CD8-positive, alpha-beta T cell (primary cell): ENCODE measurements at regions of chr17 and their contacts with region 1.

Region 1: GRCh38 chr17:42388381-42389134 is at the start of gene STAT3:
- DNase-seq: peak; percentile 99 to 100 (median 100)
- ATAC-seq: peak; percentile 86
- H3K4me3 ChIP-seq: peak within 1 kb of the TSS; percentile 61 to 86
- H3K4me3 Mint-ChIP-seq: peak within 1 kb of the TSS; percentile 99
- H3K27ac ChIP-seq: peak within 1 kb of the TSS; percentile 99
- H3K27ac Mint-ChIP-seq: peak within 1 kb of the TSS; percentile 100
- H3K4me1 ChIP-seq: peaks cover 29% of the 10 kb centered on the region
- H3K4me1 Mint-ChIP-seq: peaks cover 47% of the 10 kb centered on the region
- H3K27me3 ChIP-seq: no peaks in the 10 kb centered on the region
- H3K27me3 Mint-ChIP-seq: no peaks in the 10 kb centered on the region
- CTCF ChIP-seq: no peak
- total RNA-seq, gene STAT3: 338 to 343 TPM

Region 2: GRCh38 chr17:41918314-41919164 is 470.0 kb before region 1 on chr17 and contains the start of gene ACLY:
- CTCF ChIA-PET with region 1: no interaction called
- POLR2A ChIA-PET with region 1: no interaction called
- intact Hi-C with region 1: loop called in 1 of 2 experiments (anchors 2 kb)
- DNase-seq: peak; percentile 89 to 97 (median 95)
- ATAC-seq: peak; percentile 99
- H3K4me3 ChIP-seq: peak within 1 kb of the TSS; percentile 94 to 100
- H3K4me3 Mint-ChIP-seq: peak within 1 kb of the TSS; percentile 90
- H3K27ac ChIP-seq: peak within 1 kb of the TSS; percentile 82 to 86
- H3K27ac Mint-ChIP-seq: peak within 1 kb of the TSS; percentile 81
- H3K4me1 ChIP-seq: peaks cover 17% of the 10 kb centered on the region
- H3K4me1 Mint-ChIP-seq: peaks cover 32% of the 10 kb centered on the region
- H3K27me3 ChIP-seq: no peaks in the 10 kb centered on the region
- H3K27me3 Mint-ChIP-seq: no peaks in the 10 kb centered on the region
- CTCF ChIP-seq: no peak
- total RNA-seq, gene ACLY: 24.9 to 25.0 TPM

Region 3: GRCh38 chr17:42248351-42249179 is 140.0 kb before region 1 on chr17:
- CTCF ChIA-PET with region 1: no interaction called
- POLR2A ChIA-PET with region 1: interaction called, 19 read pairs
- intact Hi-C with region 1: loop called (anchors 1 to 2 kb)
- DNase-seq: peak; percentile 60 to 96 (median 80)
- ATAC-seq: peak; percentile 85
- H3K4me3 ChIP-seq: peak overlapping the region; percentile 36 to 46
- H3K4me3 Mint-ChIP-seq: peak overlapping the region; percentile 81
- H3K27ac ChIP-seq: peak overlapping the region; percentile 87 to 90
- H3K27ac Mint-ChIP-seq: peak overlapping the region; percentile 98
- H3K4me1 ChIP-seq: peaks cover 55% of the 10 kb centered on the region
- H3K4me1 Mint-ChIP-seq: peaks cover 70% of the 10 kb centered on the region
- H3K27me3 ChIP-seq: no peaks in the 10 kb centered on the region
- H3K27me3 Mint-ChIP-seq: no peaks in the 10 kb centered on the region
- CTCF ChIP-seq: no peak

Region 4: GRCh38 chr17:42312285-42313130 is 76.0 kb before region 1 on chr17:
- CTCF ChIA-PET with region 1: interaction called, 672 read pairs
- POLR2A ChIA-PET with region 1: interaction called, 10 read pairs
- intact Hi-C with region 1: no loop called
- DNase-seq: peak; percentile 45 to 89 (median 79)
- ATAC-seq: peak; percentile 61
- H3K4me3 ChIP-seq: peak overlapping the region; percentile 20 to 38
- H3K4me3 Mint-ChIP-seq: peak overlapping the region; percentile 74
- H3K27ac ChIP-seq: peak overlapping the region; percentile 31 to 66
- H3K27ac Mint-ChIP-seq: peak overlapping the region; percentile 86
- H3K4me1 ChIP-seq: peaks cover 69% of the 10 kb centered on the region
- H3K4me1 Mint-ChIP-seq: peaks cover 72% of the 10 kb centered on the region
- H3K27me3 ChIP-seq: no peaks in the 10 kb centered on the region
- H3K27me3 Mint-ChIP-seq: no peaks in the 10 kb centered on the region
- CTCF ChIP-seq: peak; percentile 62

Region 5: DNA sequence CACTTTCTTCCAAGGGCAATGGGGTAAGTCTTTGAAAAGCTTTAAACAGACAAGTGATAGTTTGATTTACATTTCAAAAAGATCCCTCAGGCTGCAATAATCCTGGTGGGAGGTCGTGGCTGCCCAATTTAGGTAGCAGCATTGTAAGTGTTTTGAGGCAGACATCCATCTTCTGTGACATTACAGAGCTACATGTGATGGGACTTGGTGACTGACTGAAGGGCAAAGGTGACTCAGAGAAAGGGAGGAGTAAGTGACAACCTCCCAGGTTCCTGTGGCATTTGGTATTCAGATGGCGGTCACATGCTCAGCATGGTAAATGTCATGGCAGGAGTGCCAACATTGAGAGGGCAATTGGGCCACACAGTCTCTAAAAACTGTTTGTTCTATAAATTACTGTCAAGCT is 26.8 kb before region 1 on chr17:
- CTCF ChIA-PET with region 1: no interaction called
- POLR2A ChIA-PET with region 1: interaction called, 15 read pairs
- intact Hi-C with region 1: no loop called
- DNase-seq: peak in 8 of 9 experiments; percentile 13 to 72 (median 47)
- ATAC-seq: peak; percentile 95
- H3K4me3 ChIP-seq: no peak overlapping the region
- H3K4me3 Mint-ChIP-seq: no peak overlapping the region
- H3K27ac ChIP-seq: peak overlapping the region in 1 of 2 experiments; percentile 51
- H3K27ac Mint-ChIP-seq: peak overlapping the region; percentile 67
- H3K4me1 ChIP-seq: peaks cover 30% of the 10 kb centered on the region
- H3K4me1 Mint-ChIP-seq: peaks cover 65% of the 10 kb centered on the region
- H3K27me3 ChIP-seq: no peaks in the 10 kb centered on the region
- H3K27me3 Mint-ChIP-seq: no peaks in the 10 kb centered on the region
- CTCF ChIP-seq: no peak

Region 6: DNA sequence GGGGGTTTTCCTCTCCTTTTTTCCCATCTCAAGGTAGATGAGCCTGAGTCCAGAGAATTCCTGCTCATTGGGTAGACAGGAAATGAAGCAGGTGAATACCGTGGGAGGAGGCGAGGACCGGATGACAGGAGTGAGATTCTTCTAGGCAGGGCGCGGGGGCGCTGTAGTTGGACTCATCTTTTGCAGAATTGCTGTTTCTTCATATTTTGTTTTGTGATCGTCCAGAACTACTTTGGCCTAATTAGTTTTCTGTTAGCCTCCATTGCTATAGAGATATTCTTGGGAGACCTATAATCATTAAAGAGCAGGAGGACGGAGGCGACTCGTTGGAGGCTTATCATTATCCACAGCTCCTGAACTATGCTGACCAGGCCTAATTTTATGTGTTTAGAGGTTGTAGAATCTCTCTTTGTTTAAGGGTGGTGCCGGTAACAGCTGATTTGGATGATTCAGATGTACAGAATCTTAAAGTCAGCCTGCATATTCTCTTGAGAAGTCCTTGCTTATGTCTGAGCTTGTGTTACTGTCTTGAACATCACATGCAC is 70.8 kb after region 1 on chr17:
- CTCF ChIA-PET with region 1: no interaction called
- POLR2A ChIA-PET with region 1: interaction called, 4 read pairs
- intact Hi-C with region 1: loop called in 1 of 2 experiments (anchors 2 kb)
- DNase-seq: peak in 2 of 9 experiments; percentile 25 to 38
- ATAC-seq: peak; percentile 15
- H3K4me3 ChIP-seq: peak overlapping the region; percentile 53 to 54
- H3K4me3 Mint-ChIP-seq: peak overlapping the region; percentile 89
- H3K27ac ChIP-seq: peak overlapping the region in 1 of 2 experiments; percentile 39
- H3K27ac Mint-ChIP-seq: peak overlapping the region; percentile 70
- H3K4me1 ChIP-seq: peaks cover 38% of the 10 kb centered on the region
- H3K4me1 Mint-ChIP-seq: peaks cover 41% of the 10 kb centered on the region
- H3K27me3 ChIP-seq: peaks cover 0 to 2% of the 10 kb centered on the region in 2 experiments
- H3K27me3 Mint-ChIP-seq: no peaks in the 10 kb centered on the region
- CTCF ChIP-seq: no peak